ENCODE measurements at regions of chrX and their contacts with region 1.

Region 1: GRCh38 chrX:19334945-19335626 is 8.6 kb upstream of the PDHA1 start:
- DNase-seq: no peak

Region 2: GRCh38 chrX:18390941-18391538 is 944.0 kb before region 1 on chrX:
- intact Hi-C with region 1: loop called in 1 of 2 experiments (anchors 10 kb)
- DNase-seq: peak; percentile 86

Region 3: DNA sequence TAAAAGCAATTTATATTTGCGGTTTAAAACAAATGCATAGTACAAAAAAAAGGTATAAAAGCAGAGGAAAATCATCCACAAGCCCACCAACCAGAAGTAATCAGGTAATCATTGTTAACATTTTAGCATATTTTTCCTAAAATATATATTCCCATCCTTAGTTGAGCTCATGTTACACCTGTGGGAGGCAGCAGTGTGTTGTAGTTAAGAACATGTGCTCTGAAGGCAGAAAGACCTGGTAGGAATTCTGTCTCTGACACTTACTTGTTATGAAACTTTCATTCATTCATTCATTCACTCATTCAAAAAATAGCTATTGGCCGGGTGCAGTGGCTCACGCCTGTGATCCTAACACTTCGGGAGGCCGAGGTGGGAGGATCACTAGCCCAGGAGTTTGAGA is 925.0 kb before region 1 on chrX:
- intact Hi-C with region 1: loop called in 1 of 2 experiments (anchors 10 kb)
- DNase-seq: no peak

Region 4: DNA sequence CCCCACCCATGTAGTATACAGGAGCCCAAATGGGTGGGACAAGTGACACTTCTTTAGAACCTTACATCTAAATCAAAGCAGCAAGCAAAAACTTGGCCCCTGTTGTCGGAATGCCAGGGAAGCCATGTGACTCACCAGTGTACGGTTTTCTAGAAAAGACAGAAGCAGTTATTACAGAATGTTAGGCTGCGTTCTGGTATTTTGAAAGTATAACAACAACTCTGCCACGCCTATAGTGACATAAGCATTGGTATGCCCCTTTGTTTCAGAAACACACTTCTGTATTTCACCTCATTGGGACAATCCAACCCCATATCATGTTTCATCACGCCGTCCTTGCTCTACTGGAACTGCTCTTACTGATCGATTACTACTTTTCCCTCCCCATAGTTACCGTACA is 23.4 kb after region 1 on chrX:
- intact Hi-C with region 1: no loop called
- DNase-seq: no peak

Region 5: DNA sequence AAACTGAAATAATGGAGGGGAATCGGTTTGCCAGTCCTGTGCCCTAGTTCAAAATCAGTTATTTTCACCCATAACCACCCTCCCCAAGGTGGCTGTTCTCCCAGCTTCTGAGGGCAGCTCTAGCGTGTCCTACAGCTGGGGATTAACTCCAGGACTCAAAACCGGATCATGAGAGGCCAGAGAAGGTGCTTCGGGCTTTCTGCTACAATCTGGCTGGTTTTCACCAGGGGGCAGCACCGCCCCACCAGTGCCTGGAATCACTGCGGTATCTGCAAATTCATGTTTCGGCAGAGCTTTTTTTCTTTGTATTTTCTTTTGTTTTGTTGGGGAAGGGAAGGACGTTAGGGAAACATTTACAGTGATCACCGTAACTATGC is 37.1 kb after region 1 on chrX:
- intact Hi-C with region 1: no loop called
- DNase-seq: peak; percentile 86

Region 6: DNA sequence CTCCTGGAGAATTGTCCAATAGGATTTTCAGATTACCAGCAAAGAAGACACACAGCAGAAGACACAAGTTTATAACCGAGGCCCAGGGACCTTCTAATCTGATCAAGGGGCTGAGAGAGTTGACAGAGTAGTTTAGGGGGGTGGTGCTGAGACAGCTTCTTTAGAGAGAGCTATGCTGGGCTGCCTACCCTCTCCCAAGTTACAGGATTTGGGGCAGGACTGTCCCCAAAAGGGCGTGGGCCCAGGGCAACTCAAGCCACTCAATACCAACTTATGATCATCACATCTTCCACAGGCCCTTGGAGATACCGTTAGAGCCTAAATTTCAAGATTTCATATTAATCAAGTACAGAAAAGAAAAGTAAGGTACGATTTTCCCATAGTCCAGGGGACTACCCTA is 51.6 kb after region 1 on chrX:
- intact Hi-C with region 1: loop called in 1 of 2 experiments (anchors 2 kb)
- DNase-seq: no peak